Ascending aorta (tissue), 2 donors: ENCODE measurements at regions of chr13 and their contacts with region 1.

Region 1: DNA sequence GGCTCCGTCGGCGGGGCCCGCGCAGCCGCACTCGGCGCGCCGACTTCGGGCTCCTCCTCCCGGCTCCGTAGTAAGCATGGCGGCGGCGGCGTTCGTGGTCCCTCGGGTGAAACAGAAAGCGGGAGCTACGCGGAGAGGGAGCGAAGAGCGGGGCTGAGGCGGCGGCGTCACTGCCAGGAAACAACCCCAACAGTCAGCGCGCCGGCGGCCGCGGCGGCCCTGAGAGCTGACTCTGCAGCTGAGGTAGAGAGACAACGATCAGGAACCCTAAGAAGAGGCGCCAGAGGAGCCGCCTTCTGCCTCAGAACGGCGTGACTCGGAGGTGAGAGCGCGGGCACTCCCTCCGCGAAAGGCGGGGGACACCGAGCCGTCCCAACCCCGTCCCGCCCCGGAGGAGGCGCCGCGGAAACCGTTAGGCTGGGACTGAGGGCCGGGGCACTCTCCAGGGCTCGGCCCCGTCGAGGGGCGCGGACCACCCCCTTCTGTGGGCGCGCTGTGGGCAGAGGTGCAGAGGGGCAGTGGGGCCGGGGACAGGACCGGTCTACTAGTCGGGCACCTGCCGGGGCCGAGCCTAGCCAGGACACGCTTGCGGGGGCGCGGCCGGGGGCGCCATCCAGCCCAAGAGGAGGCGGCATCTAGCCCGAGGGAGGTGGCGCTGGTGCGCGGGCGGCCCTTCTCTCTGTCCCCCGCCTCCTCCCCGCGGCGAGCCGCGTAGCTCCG is at the start of gene FNDC3A:
- DNase-seq: peak; percentile 59 to 90
- H3K4me3 ChIP-seq: peak within 1 kb of the TSS; percentile 79 to 95
- H3K27ac ChIP-seq: peak within 1 kb of the TSS; percentile 97 to 100
- H3K4me1 ChIP-seq: peaks cover 0 to 3% of the 10 kb centered on the region in 2 donors
- H3K27me3 ChIP-seq: no peaks in the 10 kb centered on the region
- CTCF ChIP-seq: peak in 1 of 3 experiments; percentile 5
- total RNA-seq, gene FNDC3A: 22.7 TPM

Region 2: GRCh38 chr13:48818495-48819031 is 157.5 kb before region 1 on chr13:
- intact Hi-C with region 1: loop called (anchors 5 kb)
- DNase-seq: peak in 1 of 2 donors; percentile 72
- H3K4me3 ChIP-seq: no peak overlapping the region
- H3K27ac ChIP-seq: peak overlapping the region; percentile 58 to 65
- H3K4me1 ChIP-seq: peaks cover 0 to 27% of the 10 kb centered on the region in 2 donors
- H3K27me3 ChIP-seq: no peaks in the 10 kb centered on the region
- CTCF ChIP-seq: no peak

Region 3: GRCh38 chr13:48885027-48885395 is 91.0 kb before region 1 on chr13:
- intact Hi-C with region 1: loop called (anchors 2 kb)
- DNase-seq: no peak
- H3K4me3 ChIP-seq: no peak overlapping the region
- H3K27ac ChIP-seq: peak overlapping the region; percentile 75
- H3K4me1 ChIP-seq: peaks cover 0 to 8% of the 10 kb centered on the region in 2 donors
- H3K27me3 ChIP-seq: no peaks in the 10 kb centered on the region
- CTCF ChIP-seq: no peak

Region 4: DNA sequence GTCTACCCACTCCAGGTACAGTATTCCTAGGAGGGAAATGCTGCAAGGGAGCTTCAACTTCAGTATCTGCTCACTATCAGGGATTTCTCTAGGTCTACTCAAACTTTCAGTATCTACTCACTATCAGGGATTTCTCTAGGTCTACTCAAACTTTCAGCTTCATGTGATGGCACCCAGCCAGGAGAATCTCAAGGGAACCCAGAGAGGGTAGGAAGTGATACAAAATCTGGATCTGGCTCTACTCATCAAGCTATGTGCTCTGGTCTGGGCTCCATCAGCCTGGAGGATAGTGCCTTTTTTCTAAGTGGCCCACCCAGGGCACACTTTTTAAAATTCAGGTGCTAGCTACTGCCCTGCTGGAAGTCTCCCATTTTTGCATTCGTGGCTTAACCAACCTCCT is 52.6 kb before region 1 on chr13:
- intact Hi-C with region 1: no loop called
- DNase-seq: no peak
- H3K4me3 ChIP-seq: no peak overlapping the region
- H3K27ac ChIP-seq: no peak overlapping the region
- H3K4me1 ChIP-seq: no peaks in the 10 kb centered on the region
- H3K27me3 ChIP-seq: no peaks in the 10 kb centered on the region
- CTCF ChIP-seq: no peak

Region 5: GRCh38 chr13:48954081-48954480 is 21.9 kb before region 1 on chr13:
- intact Hi-C with region 1: loop called (anchors 2 kb)
- DNase-seq: no peak
- H3K4me3 ChIP-seq: no peak overlapping the region
- H3K27ac ChIP-seq: peak overlapping the region; percentile 58 to 61
- H3K4me1 ChIP-seq: peaks cover 2 to 4% of the 10 kb centered on the region in 2 donors
- H3K27me3 ChIP-seq: no peaks in the 10 kb centered on the region
- CTCF ChIP-seq: no peak

Region 6: DNA sequence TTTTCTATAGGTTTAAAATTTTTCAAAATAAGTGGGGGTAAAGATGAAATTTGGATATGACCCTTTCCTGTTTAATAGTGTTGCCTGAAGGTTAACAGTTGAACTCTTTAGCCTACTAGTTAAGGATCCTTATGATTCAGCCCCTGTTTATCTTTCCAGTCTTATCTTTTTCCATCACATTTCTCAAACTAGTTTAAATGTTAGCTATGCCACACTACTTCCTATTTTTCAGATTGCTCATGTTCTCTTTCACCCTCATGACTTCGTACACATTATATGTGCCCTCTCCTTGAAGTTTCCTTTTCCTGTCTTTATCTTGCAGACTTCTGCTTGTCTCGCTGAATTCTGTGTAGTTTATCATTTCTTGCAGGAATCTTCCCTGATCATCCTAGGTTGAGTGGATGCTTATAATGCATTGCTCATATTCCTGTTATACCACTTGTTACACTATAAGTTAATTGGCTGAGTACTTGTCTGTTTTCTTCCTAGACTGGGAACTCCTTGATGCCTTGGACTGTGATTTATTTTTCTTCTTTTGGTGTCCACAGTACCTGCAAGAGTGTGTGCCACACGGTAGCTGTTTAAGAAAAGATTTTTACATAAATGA is 86.4 kb after region 1 on chr13:
- intact Hi-C with region 1: no loop called
- DNase-seq: no peak
- H3K4me3 ChIP-seq: no peak overlapping the region
- H3K27ac ChIP-seq: no peak overlapping the region
- H3K4me1 ChIP-seq: peaks cover 0 to 4% of the 10 kb centered on the region in 2 donors
- H3K27me3 ChIP-seq: no peaks in the 10 kb centered on the region
- CTCF ChIP-seq: no peak

Region 7: GRCh38 chr13:49110122-49110912 is 134.3 kb after region 1 on chr13:
- intact Hi-C with region 1: loop called (anchors 5 kb)
- DNase-seq: peak; percentile 33 to 85
- H3K4me3 ChIP-seq: peak overlapping the region; percentile 54 to 67
- H3K27ac ChIP-seq: no peak overlapping the region
- H3K4me1 ChIP-seq: peaks cover 0 to 13% of the 10 kb centered on the region in 2 donors
- H3K27me3 ChIP-seq: no peaks in the 10 kb centered on the region
- CTCF ChIP-seq: no peak

Region 8: GRCh38 chr13:49247643-49248621 is 271.9 kb after region 1 on chr13 and contains the start of gene CDADC1:
- intact Hi-C with region 1: loop called (anchors 5 kb)
- DNase-seq: peak; percentile 88 to 99
- H3K4me3 ChIP-seq: peak within 1 kb of the TSS; percentile 67 to 78
- H3K27ac ChIP-seq: peak within 1 kb of the TSS; percentile 81 to 93
- H3K4me1 ChIP-seq: peaks cover 0 to 5% of the 10 kb centered on the region in 2 donors
- H3K27me3 ChIP-seq: no peaks in the 10 kb centered on the region
- CTCF ChIP-seq: no peak
- total RNA-seq, gene CDADC1: 0.96 TPM

Region 9: DNA sequence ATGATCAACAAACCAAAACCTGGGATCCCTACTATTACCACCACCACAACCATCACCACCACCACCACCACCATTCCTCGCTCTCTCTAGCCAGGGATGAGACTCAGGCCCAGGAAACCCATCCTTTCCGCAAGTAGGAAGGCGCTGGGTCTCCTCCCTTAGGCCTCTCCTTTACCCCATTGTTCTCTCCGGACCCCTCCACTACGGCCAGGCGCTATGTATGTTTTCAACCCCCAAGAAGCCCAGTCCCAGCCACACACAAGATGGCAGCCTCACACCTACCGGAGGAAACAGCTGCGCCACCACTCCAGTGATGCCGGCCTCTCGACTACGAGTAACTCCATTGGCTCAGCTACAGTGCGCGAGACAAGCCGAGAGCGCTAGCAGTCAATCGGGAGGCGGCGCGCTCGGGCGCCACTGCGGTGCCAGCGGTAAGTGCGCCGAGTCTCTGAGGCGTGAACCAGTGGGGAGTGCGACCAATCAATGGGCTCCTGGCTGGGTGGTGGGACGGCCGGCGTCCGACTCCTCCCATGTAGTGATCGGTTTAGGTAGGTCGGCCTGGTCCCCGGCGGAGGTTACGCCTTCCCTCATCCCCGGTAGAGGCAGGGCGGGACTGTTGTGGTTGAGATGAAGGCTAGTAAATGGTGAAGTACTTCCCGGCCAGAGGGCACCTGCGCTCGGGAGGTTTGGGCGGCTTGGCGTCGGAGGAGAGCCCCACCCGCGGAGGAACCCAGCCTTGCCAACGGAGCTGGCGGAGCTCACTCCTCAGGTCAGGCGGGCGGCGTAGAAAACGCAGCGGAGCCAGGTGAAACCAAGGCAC is 467.9 kb after region 1 on chr13 and contains the starts of genes CAB39L and SETDB2:
- intact Hi-C with region 1: loop called (anchors 10 kb)
- DNase-seq: peak; percentile 99 to 100
- H3K4me3 ChIP-seq: peak within 1 kb of the TSS; percentile 75 to 84
- H3K27ac ChIP-seq: peak within 1 kb of the TSS; percentile 96 to 99
- H3K4me1 ChIP-seq: peaks cover 2 to 20% of the 10 kb centered on the region in 2 donors
- H3K27me3 ChIP-seq: no peaks in the 10 kb centered on the region
- CTCF ChIP-seq: peak; percentile 26 to 45 (median 42)
- total RNA-seq, gene CAB39L: 30.1 TPM
- total RNA-seq, gene SETDB2: 7.2 TPM